ENCODE measurements at regions of chr12 and their contacts with region 1.

Region 1: GRCh38 chr12:120971299-120972179 is 6.8 kb upstream of the HNF1A start:
- DNase-seq: peak; percentile 57
- ATAC-seq: peak; percentile 98
- H3K4me3 Mint-ChIP-seq: no peak overlapping the region
- H3K27ac Mint-ChIP-seq: no peak overlapping the region
- H3K4me1 Mint-ChIP-seq: peaks cover 2% of the 10 kb centered on the region
- H3K27me3 Mint-ChIP-seq: no peaks in the 10 kb centered on the region
- CTCF ChIP-seq: peak; percentile 79

Region 2: GRCh38 chr12:120710031-120710804 is 261.3 kb before region 1 on chr12 and contains the start of gene UNC119B:
- CTCF ChIA-PET with region 1: interaction called, 10 read pairs
- POLR2A ChIA-PET with region 1: no interaction called
- intact Hi-C with region 1: no loop called
- DNase-seq: peak; percentile 76
- ATAC-seq: peak; percentile 81
- H3K4me3 Mint-ChIP-seq: peak within 1 kb of the TSS; percentile 80
- H3K27ac Mint-ChIP-seq: peak within 1 kb of the TSS; percentile 76
- H3K4me1 Mint-ChIP-seq: peaks cover 26% of the 10 kb centered on the region
- H3K27me3 Mint-ChIP-seq: no peaks in the 10 kb centered on the region
- CTCF ChIP-seq: no peak
- total RNA-seq, gene UNC119B: 23.8 to 24.3 TPM

Region 3: GRCh38 chr12:120856980-120857379 is 114.6 kb before region 1 on chr12:
- CTCF ChIA-PET with region 1: interaction called, 12 read pairs
- POLR2A ChIA-PET with region 1: no interaction called
- intact Hi-C with region 1: loop called (anchors 10 kb)
- DNase-seq: no peak
- ATAC-seq: peak; percentile 54
- H3K4me3 Mint-ChIP-seq: no peak overlapping the region
- H3K27ac Mint-ChIP-seq: peak overlapping the region; percentile 15
- H3K4me1 Mint-ChIP-seq: peaks cover 44% of the 10 kb centered on the region
- H3K27me3 Mint-ChIP-seq: no peaks in the 10 kb centered on the region
- CTCF ChIP-seq: peak; percentile 24

Region 4: GRCh38 chr12:120944645-120945231 is 26.8 kb before region 1 on chr12:
- CTCF ChIA-PET with region 1: interaction called, 50 read pairs
- POLR2A ChIA-PET with region 1: no interaction called
- intact Hi-C with region 1: no loop called
- DNase-seq: peak; percentile 86
- ATAC-seq: peak; percentile 81
- H3K4me3 Mint-ChIP-seq: no peak overlapping the region
- H3K27ac Mint-ChIP-seq: no peak overlapping the region
- H3K4me1 Mint-ChIP-seq: peaks cover 9% of the 10 kb centered on the region
- H3K27me3 Mint-ChIP-seq: no peaks in the 10 kb centered on the region
- CTCF ChIP-seq: peak; percentile 81

Region 5: GRCh38 chr12:120984351-120984898 is 12.9 kb after region 1 on chr12:
- CTCF ChIA-PET with region 1: interaction called, 24 read pairs
- POLR2A ChIA-PET with region 1: no interaction called
- intact Hi-C with region 1: no loop called
- DNase-seq: no peak
- ATAC-seq: no peak
- H3K4me3 Mint-ChIP-seq: no peak overlapping the region
- H3K27ac Mint-ChIP-seq: no peak overlapping the region
- H3K4me1 Mint-ChIP-seq: no peaks in the 10 kb centered on the region
- H3K27me3 Mint-ChIP-seq: no peaks in the 10 kb centered on the region
- CTCF ChIP-seq: no peak